Activated T-helper 2 cell treated with anti-CD3 and anti-CD28 coated beads, Interferon-gamma antibody, Interleukin-2, Interleukin-4, amounts not matched to agents 10 μg/mL and 5 μg/mL and 100 μg/mL, durations not matched to agents 14 hours and 24 hours and 36 hours (primary cell): ENCODE measurements at regions of chr18 and their contacts with region 1.

Region 1: GRCh38 chr18:68714609-68715496 is at the start of gene TMX3:
- DNase-seq: peak; percentile 88
- H3K4me3 Mint-ChIP-seq: peak within 1 kb of the TSS; percentile 93
- H3K27ac Mint-ChIP-seq: peak within 1 kb of the TSS; percentile 87
- H3K4me1 Mint-ChIP-seq: peaks cover 37% of the 10 kb centered on the region
- H3K27me3 Mint-ChIP-seq: no peaks in the 10 kb centered on the region
- total RNA-seq, gene TMX3: 62.4 and 71.0 TPM in 2 replicates

Region 2: DNA sequence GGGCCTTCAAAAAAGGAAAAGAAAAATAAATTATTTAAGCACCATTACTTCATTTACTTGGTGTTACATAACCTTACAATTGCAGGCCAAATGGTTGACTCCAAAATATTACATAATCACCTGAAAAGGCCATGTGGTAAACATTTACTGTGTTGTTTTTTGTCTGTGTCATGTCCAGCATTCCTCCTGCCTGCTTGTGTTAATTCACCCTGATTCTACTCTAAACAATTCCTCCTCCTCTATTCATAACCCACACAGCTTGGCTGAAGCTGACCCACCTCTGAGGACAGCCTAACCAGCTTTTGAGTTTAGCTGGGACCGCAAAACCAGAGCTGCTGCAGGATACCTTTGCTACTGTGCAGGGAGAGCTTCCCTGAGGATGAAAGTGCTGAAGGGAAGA is 35.3 kb before region 1 on chr18:
- intact Hi-C with region 1: no loop called
- DNase-seq: no peak
- H3K4me3 Mint-ChIP-seq: no peak overlapping the region
- H3K27ac Mint-ChIP-seq: no peak overlapping the region
- H3K4me1 Mint-ChIP-seq: peaks cover 3% of the 10 kb centered on the region
- H3K27me3 Mint-ChIP-seq: no peaks in the 10 kb centered on the region

Region 3: GRCh38 chr18:68694316-68694715 is 20.5 kb before region 1 on chr18:
- intact Hi-C with region 1: loop called (anchors 2 kb)
- DNase-seq: no peak
- H3K4me3 Mint-ChIP-seq: no peak overlapping the region
- H3K27ac Mint-ChIP-seq: no peak overlapping the region
- H3K4me1 Mint-ChIP-seq: peaks cover 6% of the 10 kb centered on the region
- H3K27me3 Mint-ChIP-seq: no peaks in the 10 kb centered on the region

Region 4: GRCh38 chr18:70205421-70206397 is 1490.9 kb after region 1 on chr18 and contains the start of gene RTTN:
- intact Hi-C with region 1: loop called (anchors 1 kb)
- DNase-seq: peak; percentile 91
- H3K4me3 Mint-ChIP-seq: peak within 1 kb of the TSS; percentile 93
- H3K27ac Mint-ChIP-seq: peak within 1 kb of the TSS; percentile 98
- H3K4me1 Mint-ChIP-seq: peaks cover 22% of the 10 kb centered on the region
- H3K27me3 Mint-ChIP-seq: peaks cover 15% of the 10 kb centered on the region
- total RNA-seq, gene RTTN: 21.0 and 25.2 TPM in 2 replicates